Heart right ventricle (tissue), 16 donors: ENCODE measurements at regions of chr5 and their contacts with region 1.

Region 1: GRCh38 chr5:160508780-160509361 is 87.2 kb downstream of the PTTG1 start:
- DNase-seq: peak in 1 of 2 donors; percentile 63
- ATAC-seq: peak; percentile 65 to 86 (median 78)
- H3K4me3 ChIP-seq: no peak overlapping the region
- H3K27ac ChIP-seq: no peak overlapping the region
- H3K4me1 ChIP-seq: peaks cover 0 to 31% (median 0%) of the 10 kb centered on the region in 9 donors
- H3K27me3 ChIP-seq: peaks cover 0 to 31% (median 7%) of the 10 kb centered on the region in 7 donors
- CTCF ChIP-seq: peak; percentile 74 to 90 (median 86)

Region 2: GRCh38 chr5:160439205-160439600 is 69.7 kb before region 1 on chr5:
- intact Hi-C with region 1: loop called in 3 of 10 experiments (anchors 2 to 5 kb)
- DNase-seq: peak; percentile 86 to 87
- ATAC-seq: peak; percentile 90 to 98 (median 95)
- H3K4me3 ChIP-seq: peak overlapping the region; percentile 9 to 55 (median 46)
- H3K27ac ChIP-seq: peak overlapping the region in 4 of 10 donors; percentile 23 to 56 (median 44)
- H3K4me1 ChIP-seq: peaks cover 0 to 26% (median 6%) of the 10 kb centered on the region in 9 donors
- H3K27me3 ChIP-seq: peaks cover 0 to 7% (median 0%) of the 10 kb centered on the region in 7 donors
- CTCF ChIP-seq: peak; percentile 86 to 96 (median 94)